Activated CD4-positive, alpha-beta T cell treated with anti-CD3 and anti-CD28 coated beads, Interleukin-2, amount 10 ng/mL, durations not matched to agents 24 days and 14 days (primary cell): ENCODE measurements at regions of chr17 and their contacts with region 1.

Region 1: DNA sequence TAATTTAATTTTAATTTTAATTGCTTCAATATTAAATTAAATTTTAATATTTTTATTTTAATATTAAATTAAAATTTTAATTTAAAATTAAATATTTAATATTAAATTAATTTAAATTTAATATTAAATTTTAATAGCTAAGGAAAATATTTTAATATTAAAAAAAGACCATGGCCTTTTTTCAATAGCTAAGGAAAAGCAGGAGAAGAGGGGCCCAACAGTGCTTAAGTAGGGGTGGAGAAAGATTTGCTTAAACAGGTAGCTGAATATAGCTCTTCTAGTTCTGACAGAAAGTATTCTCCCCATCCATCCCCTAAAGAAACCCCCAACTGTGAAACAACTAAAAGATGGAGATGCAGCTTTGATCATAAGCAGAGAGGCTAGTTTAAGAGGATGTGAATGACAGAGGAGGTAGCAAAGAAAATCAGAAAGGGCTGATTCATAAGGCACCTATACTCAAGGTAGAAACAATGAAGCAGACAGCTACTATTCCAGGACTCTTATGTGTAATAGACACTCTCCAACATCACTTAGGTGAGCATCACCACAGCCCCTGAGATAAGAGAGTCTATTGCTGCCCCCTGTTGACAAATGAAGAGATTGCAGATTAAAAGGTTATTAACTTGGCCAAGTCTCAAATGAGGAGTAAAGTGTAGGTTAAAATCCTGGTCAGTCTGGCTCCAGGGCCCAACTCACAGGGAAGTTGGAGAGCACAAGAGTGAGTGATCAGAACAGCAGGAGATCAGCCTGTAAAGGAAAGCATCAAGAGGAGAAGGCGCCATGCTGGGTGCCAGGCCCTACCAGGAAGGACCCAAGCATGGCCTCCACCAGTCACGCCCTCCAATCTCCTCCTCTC is 7.8 kb upstream of the RNASEK start:
- DNase-seq: peak; percentile 89
- H3K4me3 Mint-ChIP-seq: no peak overlapping the region
- H3K27ac Mint-ChIP-seq: no peak overlapping the region
- H3K4me1 Mint-ChIP-seq: peaks cover 20% of the 10 kb centered on the region
- H3K27me3 Mint-ChIP-seq: no peaks in the 10 kb centered on the region

Region 2: GRCh38 chr17:6666077-6666521 is 338.5 kb before region 1 on chr17:
- intact Hi-C with region 1: loop called (anchors 5 kb)
- DNase-seq: peak; percentile 84
- H3K4me3 Mint-ChIP-seq: no peak overlapping the region
- H3K27ac Mint-ChIP-seq: no peak overlapping the region
- H3K4me1 Mint-ChIP-seq: peaks cover 14% of the 10 kb centered on the region
- H3K27me3 Mint-ChIP-seq: peaks cover 18% of the 10 kb centered on the region

Region 3: DNA sequence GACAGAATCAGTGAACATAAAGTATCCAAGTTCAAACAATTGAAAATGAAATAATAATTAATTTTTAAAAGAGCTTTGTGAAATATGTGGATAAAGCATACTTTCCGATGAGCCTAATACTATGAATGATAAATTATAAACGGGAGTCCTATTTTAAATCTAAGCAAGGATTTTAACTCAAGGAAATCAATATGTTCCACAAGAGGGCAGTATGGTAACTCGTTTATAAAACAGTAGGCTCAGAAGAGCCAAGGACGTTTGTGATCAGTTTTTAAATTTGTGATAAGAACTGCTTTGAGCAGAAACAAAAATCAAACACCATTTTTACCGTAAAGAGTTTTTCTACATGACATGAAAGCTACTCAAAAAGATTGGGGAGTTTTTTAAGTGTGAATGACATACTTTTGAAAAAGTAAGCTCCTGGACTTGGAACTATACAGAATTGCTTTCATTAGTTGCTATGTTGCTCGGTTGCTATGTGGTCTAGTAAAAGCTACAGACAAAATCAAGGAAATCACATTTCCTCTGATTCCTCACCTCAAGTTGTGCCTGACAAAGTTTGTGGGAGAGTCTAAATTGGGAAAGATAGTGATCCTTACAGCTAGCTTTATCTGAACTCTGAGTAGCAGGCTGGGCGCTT is 161.3 kb before region 1 on chr17:
- intact Hi-C with region 1: loop called (anchors 2 kb)
- DNase-seq: no peak
- H3K4me3 Mint-ChIP-seq: no peak overlapping the region
- H3K27ac Mint-ChIP-seq: no peak overlapping the region
- H3K4me1 Mint-ChIP-seq: peaks cover 12% of the 10 kb centered on the region
- H3K27me3 Mint-ChIP-seq: peaks cover 51% of the 10 kb centered on the region

Region 4: GRCh38 chr17:6913608-6914443 is 90.8 kb before region 1 on chr17:
- intact Hi-C with region 1: loop called (anchors 1 kb)
- DNase-seq: peak; percentile 92
- H3K4me3 Mint-ChIP-seq: peak overlapping the region; percentile 82
- H3K27ac Mint-ChIP-seq: no peak overlapping the region
- H3K4me1 Mint-ChIP-seq: peaks cover 20% of the 10 kb centered on the region
- H3K27me3 Mint-ChIP-seq: peaks cover 32% of the 10 kb centered on the region

Region 5: GRCh38 chr17:6936370-6937028 is 68.1 kb before region 1 on chr17:
- intact Hi-C with region 1: no loop called
- DNase-seq: peak; percentile 74
- H3K4me3 Mint-ChIP-seq: peak overlapping the region; percentile 56
- H3K27ac Mint-ChIP-seq: peak overlapping the region; percentile 53
- H3K4me1 Mint-ChIP-seq: peaks cover 14% of the 10 kb centered on the region
- H3K27me3 Mint-ChIP-seq: no peaks in the 10 kb centered on the region